Psoas muscle (tissue), 8 donors: ENCODE measurements at regions of chr20 and their contacts with region 1.

Region 1: GRCh38 chr20:3679749-3680700 is 1.8 kb downstream of the ADAM33 start:
- DNase-seq: peak; percentile 78 to 79
- ATAC-seq: peak in 2 of 4 donors; percentile 11 to 30
- H3K4me3 ChIP-seq: peak overlapping the region; percentile 60
- H3K27ac ChIP-seq: peak overlapping the region; percentile 38
- H3K4me1 ChIP-seq: no peaks in the 10 kb centered on the region
- H3K27me3 ChIP-seq: peaks cover 0 to 30% (median 3%) of the 10 kb centered on the region in 3 donors
- CTCF ChIP-seq: no peak

Region 2: DNA sequence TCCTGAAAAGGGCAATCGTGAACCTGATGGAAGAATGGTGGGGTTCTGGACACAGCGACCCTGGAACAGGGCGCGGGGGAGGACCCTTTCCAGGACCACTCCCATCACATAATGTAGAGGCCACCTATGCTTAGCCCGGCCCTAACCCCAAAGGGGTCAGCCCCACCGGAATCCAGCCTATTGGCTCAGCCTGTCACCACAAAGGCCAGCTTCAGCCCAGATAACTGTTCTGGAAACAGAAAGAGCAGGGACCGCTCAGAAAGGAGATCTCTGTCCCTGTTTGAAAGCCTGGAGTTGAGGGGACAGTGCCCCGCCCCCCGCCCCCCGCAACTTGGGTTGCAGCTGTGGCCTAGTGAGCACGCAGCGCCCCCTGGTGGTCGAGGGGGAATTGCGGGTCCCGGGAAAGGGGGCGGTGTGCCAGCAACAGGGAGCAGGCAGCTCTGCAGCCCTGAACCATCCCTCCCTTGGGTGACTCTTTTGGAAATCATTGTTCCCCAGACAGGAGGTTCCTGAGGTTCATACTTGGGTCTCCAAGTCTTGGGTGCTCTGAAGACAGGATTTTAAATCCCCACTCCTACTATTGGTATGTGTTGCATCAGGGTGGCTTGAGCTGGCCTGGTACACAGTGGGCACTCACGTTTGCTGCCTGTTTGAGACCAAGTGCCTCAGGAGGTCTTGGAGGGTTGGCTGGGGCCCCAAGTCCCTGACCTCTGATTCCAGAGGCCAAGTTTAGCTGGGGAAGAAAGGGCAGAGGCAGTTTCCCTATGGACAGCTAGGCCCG is 30.9 kb after region 1 on chr20:
- intact Hi-C with region 1: loop called (anchors 1 to 2 kb)
- DNase-seq: peak; percentile 79 to 86
- ATAC-seq: peak in 1 of 4 donors; percentile 59
- H3K4me3 ChIP-seq: peak overlapping the region; percentile 19
- H3K27ac ChIP-seq: no peak overlapping the region
- H3K4me1 ChIP-seq: peaks cover 7% of the 10 kb centered on the region
- H3K27me3 ChIP-seq: no peaks in the 10 kb centered on the region
- CTCF ChIP-seq: peak; percentile 94

Region 3: DNA sequence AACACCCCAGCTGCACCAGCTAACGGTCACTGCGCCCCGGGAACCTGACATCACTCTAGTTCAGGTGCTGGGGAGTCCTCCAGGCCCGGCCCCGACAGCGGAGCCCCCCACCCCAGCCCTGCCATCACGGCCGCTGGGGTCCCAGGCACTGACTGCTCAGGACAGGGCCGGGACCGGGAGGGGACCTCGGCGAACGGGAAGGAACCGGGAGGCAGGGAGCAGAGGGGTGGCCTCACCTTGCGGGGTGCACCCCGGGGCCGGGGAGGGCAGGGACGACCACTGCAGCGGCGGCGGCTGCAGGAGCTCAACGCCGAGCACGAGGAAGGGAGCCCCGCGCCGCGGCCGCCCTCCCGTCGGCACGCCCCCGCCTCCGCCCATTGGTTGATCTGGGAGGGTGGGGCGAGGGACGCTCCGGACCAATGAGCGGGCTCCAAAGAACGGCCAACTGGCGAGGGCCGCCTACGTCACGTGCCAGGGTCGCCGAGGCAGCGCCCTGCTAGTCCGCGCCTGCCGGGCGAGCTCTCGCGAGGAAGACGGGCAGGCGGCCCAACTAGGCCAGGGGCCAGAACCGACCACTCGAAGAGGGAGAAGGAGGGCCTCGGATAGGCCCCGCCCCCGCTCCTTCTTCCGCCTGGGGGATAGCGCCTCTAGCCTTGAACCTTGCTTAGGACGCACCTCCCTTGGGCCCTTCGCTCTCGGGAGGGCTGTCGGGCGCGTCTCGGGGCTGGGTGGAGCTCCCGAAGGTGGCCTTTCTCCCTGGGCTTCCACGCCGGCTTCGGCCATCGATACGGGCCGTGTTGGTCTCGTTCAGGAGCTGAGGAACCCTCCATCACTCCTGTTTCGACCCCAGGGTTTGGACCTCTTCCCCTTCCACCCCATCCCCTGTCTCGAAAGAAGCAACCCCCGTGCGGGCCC is 87.7 kb after region 1 on chr20 and contains the start of gene ADISSP:
- intact Hi-C with region 1: loop called in 1 of 2 experiments (anchors 2 kb)
- DNase-seq: peak; percentile 99 to 100
- ATAC-seq: peak; percentile 97 to 98 (median 98)
- H3K4me3 ChIP-seq: peak within 1 kb of the TSS; percentile 85
- H3K27ac ChIP-seq: peak within 1 kb of the TSS; percentile 84
- H3K4me1 ChIP-seq: peaks cover 10% of the 10 kb centered on the region
- H3K27me3 ChIP-seq: no peaks in the 10 kb centered on the region
- CTCF ChIP-seq: peak; percentile 4
- total RNA-seq, gene ADISSP: 11.9 to 16.0 (median 13.4) TPM